ENCODE measurements at regions of chr4 and their contacts with region 1.

Region 1: GRCh38 chr4:177441803-177442622 is at the start of gene AGA:
- DNase-seq: peak; percentile 95
- H3K4me3 Mint-ChIP-seq: peak within 1 kb of the TSS; percentile 94
- H3K27ac Mint-ChIP-seq: peak within 1 kb of the TSS; percentile 97
- H3K4me1 Mint-ChIP-seq: peaks cover 31% of the 10 kb centered on the region
- H3K27me3 Mint-ChIP-seq: no peaks in the 10 kb centered on the region
- total RNA-seq, gene AGA: 19.5 and 21.0 TPM in 2 replicates

Region 2: GRCh38 chr4:176319704-176320339 is 1122.2 kb before region 1 on chr4 and contains the start of gene SPCS3:
- intact Hi-C with region 1: loop called (anchors 1 kb)
- DNase-seq: peak; percentile 92
- H3K4me3 Mint-ChIP-seq: peak within 1 kb of the TSS; percentile 94
- H3K27ac Mint-ChIP-seq: peak within 1 kb of the TSS; percentile 93
- H3K4me1 Mint-ChIP-seq: peaks cover 30% of the 10 kb centered on the region
- H3K27me3 Mint-ChIP-seq: peaks cover 5% of the 10 kb centered on the region
- total RNA-seq, gene SPCS3: 197 and 208 TPM in 2 replicates

Region 3: GRCh38 chr4:177302371-177303100 is 139.5 kb before region 1 on chr4:
- intact Hi-C with region 1: no loop called
- DNase-seq: no peak
- H3K4me3 Mint-ChIP-seq: no peak overlapping the region
- H3K27ac Mint-ChIP-seq: no peak overlapping the region
- H3K4me1 Mint-ChIP-seq: peaks cover 6% of the 10 kb centered on the region
- H3K27me3 Mint-ChIP-seq: peaks cover 5% of the 10 kb centered on the region

Region 4: GRCh38 chr4:177401658-177402273 is 40.2 kb before region 1 on chr4:
- intact Hi-C with region 1: loop called (anchors 5 kb)
- DNase-seq: no peak
- H3K4me3 Mint-ChIP-seq: peak overlapping the region; percentile 0
- H3K27ac Mint-ChIP-seq: no peak overlapping the region
- H3K4me1 Mint-ChIP-seq: peaks cover 30% of the 10 kb centered on the region
- H3K27me3 Mint-ChIP-seq: peaks cover 16% of the 10 kb centered on the region

Measured in activated T-helper 2 cell treated with anti-CD3 and anti-CD28 coated beads, Interferon-gamma antibody, Interleukin-2, Interleukin-4, amounts not matched to agents 10 μg/mL and 5 μg/mL and 100 μg/mL, durations not matched to agents 14 hours and 24 hours and 36 hours (primary cell).